Mammary epithelial cell (primary cell): ENCODE measurements at regions of chr17 and their contacts with region 1.

Region 1: DNA sequence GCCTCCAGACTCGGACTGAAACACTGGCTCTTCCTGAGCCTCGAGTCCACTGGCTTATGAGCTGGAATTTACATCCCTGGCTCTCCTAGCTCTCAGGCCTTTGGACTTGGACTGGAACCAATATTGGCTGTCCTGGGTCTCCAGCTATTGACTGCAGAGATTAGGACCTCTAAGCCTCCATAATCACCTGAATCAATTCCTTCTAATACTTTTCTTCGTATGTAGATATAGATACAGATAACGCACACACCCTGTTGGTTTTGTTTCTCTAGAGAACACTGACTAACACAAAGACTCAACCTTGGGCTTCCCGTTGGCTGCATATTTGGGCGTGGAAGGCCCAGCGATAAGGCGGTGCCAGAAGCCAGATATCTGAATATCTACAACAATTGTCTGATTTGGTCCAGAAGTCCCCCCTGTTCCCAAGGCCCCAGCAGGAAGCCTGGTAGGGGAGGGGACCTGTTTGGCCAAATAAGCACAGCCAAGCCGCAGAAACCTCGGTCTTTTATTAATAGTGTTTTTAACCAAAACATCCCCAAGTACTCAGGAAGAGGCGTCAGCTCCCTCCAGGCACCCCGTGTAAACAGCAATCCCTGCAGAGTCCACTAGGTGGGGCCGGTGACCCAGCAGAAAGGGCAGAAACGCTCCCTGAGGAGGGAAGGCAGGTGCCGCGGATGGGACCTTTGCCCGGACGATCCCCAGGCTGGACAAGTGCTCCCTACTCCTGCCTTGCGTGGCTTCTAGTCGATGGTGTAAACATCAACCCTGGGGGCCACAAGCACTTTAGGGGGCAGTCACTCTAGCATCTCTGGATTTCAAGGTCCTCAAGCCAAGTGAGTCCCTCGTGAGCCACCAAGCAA is 57.0 kb downstream of the ABR start:
- DNase-seq: peak; percentile 68
- H3K4me3 ChIP-seq: no peak overlapping the region
- H3K27ac ChIP-seq: no peak overlapping the region
- H3K4me1 ChIP-seq: peaks cover 20% of the 10 kb centered on the region
- H3K27me3 ChIP-seq: no peaks in the 10 kb centered on the region
- CTCF ChIP-seq: peak; percentile 77 to 86

Region 2: DNA sequence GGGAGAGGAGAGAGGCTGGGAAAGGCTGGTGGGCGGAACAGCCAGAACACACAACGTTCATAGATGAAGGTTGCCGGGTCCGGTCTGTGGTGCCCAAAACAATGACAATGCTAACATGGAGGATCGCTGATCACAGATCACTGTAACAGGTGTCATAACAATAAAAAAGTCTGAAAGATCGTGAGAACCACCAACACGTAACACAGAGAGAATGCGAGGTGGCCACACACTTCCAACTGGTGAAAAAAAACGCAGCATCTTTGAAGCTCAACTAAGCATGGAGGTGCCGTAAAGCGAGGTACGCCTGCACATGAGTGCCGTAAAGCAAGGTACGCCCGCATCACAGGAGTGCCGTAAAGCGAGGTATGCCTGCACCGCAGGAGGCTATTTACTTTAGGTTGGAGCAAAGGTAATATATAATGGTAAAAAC is 14.7 kb after region 1 on chr17:
- CTCF ChIA-PET with region 1: no interaction called
- dilution Hi-C with region 1: no loop called
- in situ Hi-C with region 1: no loop called
- intact Hi-C with region 1: no loop called
- DNase-seq: no peak
- H3K4me3 ChIP-seq: no peak overlapping the region
- H3K27ac ChIP-seq: no peak overlapping the region
- H3K4me1 ChIP-seq: no peaks in the 10 kb centered on the region
- H3K27me3 ChIP-seq: no peaks in the 10 kb centered on the region
- CTCF ChIP-seq: no peak

Region 3: GRCh38 chr17:1147661-1148060 is 24.9 kb after region 1 on chr17:
- CTCF ChIA-PET with region 1: interaction called, 13 read pairs
- dilution Hi-C with region 1: no loop called
- in situ Hi-C with region 1: no loop called
- intact Hi-C with region 1: loop called (anchors 1 kb)
- DNase-seq: peak; percentile 74
- H3K4me3 ChIP-seq: no peak overlapping the region
- H3K27ac ChIP-seq: no peak overlapping the region
- H3K4me1 ChIP-seq: no peaks in the 10 kb centered on the region
- H3K27me3 ChIP-seq: no peaks in the 10 kb centered on the region
- CTCF ChIP-seq: peak; percentile 61 to 81

Region 4: DNA sequence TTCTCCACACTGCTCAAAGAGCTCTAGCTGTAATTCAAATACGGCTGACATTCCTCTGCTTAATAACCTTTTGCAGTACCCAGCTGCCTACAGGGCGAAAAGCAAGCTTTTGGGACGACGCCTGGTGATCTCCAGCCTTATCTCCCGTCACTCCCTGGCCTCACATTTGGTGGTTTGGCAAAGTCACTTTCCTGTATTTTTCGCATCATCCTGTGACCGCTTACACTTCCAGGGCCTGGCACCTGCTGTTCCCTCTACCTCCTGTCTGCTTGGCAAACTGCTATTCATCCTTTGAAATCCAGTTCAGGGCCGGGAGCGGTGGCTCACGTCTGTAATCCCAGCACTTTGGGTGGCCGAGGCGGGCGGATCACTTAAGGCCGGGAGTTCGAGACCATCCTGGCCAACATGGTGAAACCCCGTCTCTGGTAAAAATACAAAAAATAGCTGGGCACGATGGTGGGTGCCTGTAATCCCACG is 144.7 kb after region 1 on chr17:
- CTCF ChIA-PET with region 1: no interaction called
- dilution Hi-C with region 1: no loop called
- in situ Hi-C with region 1: no loop called
- intact Hi-C with region 1: loop called (anchors 1 kb)
- DNase-seq: no peak
- H3K4me3 ChIP-seq: peak overlapping the region; percentile 57 to 75 (median 67)
- H3K27ac ChIP-seq: no peak overlapping the region
- H3K4me1 ChIP-seq: no peaks in the 10 kb centered on the region
- H3K27me3 ChIP-seq: peaks cover 19% of the 10 kb centered on the region
- CTCF ChIP-seq: no peak

Region 5: GRCh38 chr17:2602597-2603017 is 1479.8 kb after region 1 on chr17:
- CTCF ChIA-PET with region 1: no interaction called
- dilution Hi-C with region 1: no loop called
- in situ Hi-C with region 1: no loop called
- intact Hi-C with region 1: no loop called
- DNase-seq: no peak
- H3K4me3 ChIP-seq: no peak overlapping the region
- H3K27ac ChIP-seq: no peak overlapping the region
- H3K4me1 ChIP-seq: no peaks in the 10 kb centered on the region
- H3K27me3 ChIP-seq: no peaks in the 10 kb centered on the region
- CTCF ChIP-seq: no peak